Posterior vena cava (tissue), 2 donors: ENCODE measurements at regions of chr18 and their contacts with region 1.

Region 1: GRCh38 chr18:75482880-75483279 is 55.4 kb upstream of the SMIM21 start:
- DNase-seq: no peak

Region 2: GRCh38 chr18:75500545-75500944 is 17.7 kb after region 1 on chr18:
- intact Hi-C with region 1: loop called in 1 of 2 experiments (anchors 1 kb)
- DNase-seq: no peak

Region 3: GRCh38 chr18:75517286-75517685 is 34.4 kb after region 1 on chr18:
- intact Hi-C with region 1: no loop called
- DNase-seq: no peak